GM13977 (cell line): ENCODE measurements at regions of chr2 and their contacts with region 1.

Region 1: GRCh38 chr2:55718165-55719008 is 24.7 kb upstream of the PNPT1 start:
- DNase-seq: peak; percentile 57
- CTCF ChIP-seq: peak; percentile 69

Region 2: DNA sequence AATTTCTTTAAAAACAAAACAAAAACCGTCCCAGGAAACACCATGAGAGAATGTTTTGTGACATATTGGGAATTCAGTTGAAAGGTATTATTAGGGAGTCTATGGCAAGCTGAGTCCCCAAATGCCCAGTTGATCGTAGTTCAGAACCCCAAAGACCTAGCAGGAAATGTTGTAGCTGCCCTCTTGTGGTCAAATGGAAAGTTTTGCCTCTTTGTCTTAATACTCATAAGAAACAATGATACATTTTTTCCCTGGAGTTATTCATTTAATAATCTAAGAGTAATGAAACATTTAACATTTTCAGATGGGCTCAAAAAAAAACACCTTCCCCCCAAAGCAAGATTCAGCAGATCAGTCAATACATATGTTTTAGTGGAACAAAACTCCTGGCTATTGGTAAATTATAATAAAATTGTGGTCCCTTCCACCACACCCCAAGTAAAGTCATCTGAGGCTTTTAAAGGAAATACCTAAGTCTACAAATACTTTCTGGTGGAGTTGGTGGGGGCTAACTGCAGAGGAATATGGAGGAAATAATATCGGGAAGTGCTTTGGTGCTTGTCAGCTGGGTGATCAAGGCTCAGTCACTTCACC is 243.0 kb after region 1 on chr2:
- in situ Hi-C with region 1: loop called (anchors 25 kb)
- DNase-seq: peak; percentile 28
- CTCF ChIP-seq: peak; percentile 46

Region 3: GRCh38 chr2:56132138-56132537 is 413.8 kb after region 1 on chr2:
- in situ Hi-C with region 1: loop called (anchors 10 kb)
- DNase-seq: peak; percentile 27
- CTCF ChIP-seq: peak; percentile 54